Endothelial cell of umbilical vein (primary cell): ENCODE measurements at regions of chr11 and their contacts with region 1.

Region 1: GRCh38 chr11:103624708-103625623 is 411.5 kb upstream of the DDI1 start:
- DNase-seq: peak; percentile 99
- H3K4me3 ChIP-seq: peak overlapping the region in 1 of 3 experiments; percentile 28
- H3K27ac ChIP-seq: peak overlapping the region; percentile 100
- H3K4me1 ChIP-seq: peaks cover 32% of the 10 kb centered on the region
- H3K27me3 ChIP-seq: no peaks in the 10 kb centered on the region
- CTCF ChIP-seq: no peak
- POLR2A ChIP-seq: peak; percentile 91

Region 2: GRCh38 chr11:102794447-102794781 is 830.6 kb before region 1 on chr11:
- CTCF ChIA-PET with region 1: no interaction called
- POLR2A ChIA-PET with region 1: no interaction called
- dilution Hi-C with region 1: no loop called
- intact Hi-C with region 1: loop called (anchors 1 kb)
- DNase-seq: peak; percentile 48
- H3K4me3 ChIP-seq: no peak overlapping the region
- H3K27ac ChIP-seq: no peak overlapping the region
- H3K4me1 ChIP-seq: peaks cover 17% of the 10 kb centered on the region
- H3K27me3 ChIP-seq: no peaks in the 10 kb centered on the region
- CTCF ChIP-seq: peak; percentile 60 to 66
- POLR2A ChIP-seq: no peak

Region 3: GRCh38 chr11:103326070-103326794 is 298.7 kb before region 1 on chr11:
- CTCF ChIA-PET with region 1: no interaction called
- POLR2A ChIA-PET with region 1: no interaction called
- dilution Hi-C with region 1: no loop called
- intact Hi-C with region 1: loop called (anchors 1 kb)
- DNase-seq: peak; percentile 77
- H3K4me3 ChIP-seq: no peak overlapping the region
- H3K27ac ChIP-seq: no peak overlapping the region
- H3K4me1 ChIP-seq: peaks cover 8% of the 10 kb centered on the region
- H3K27me3 ChIP-seq: no peaks in the 10 kb centered on the region
- CTCF ChIP-seq: peak; percentile 67 to 74
- POLR2A ChIP-seq: no peak

Region 4: GRCh38 chr11:103609117-103610066 is 15.6 kb before region 1 on chr11:
- CTCF ChIA-PET with region 1: interaction called, 26 read pairs
- POLR2A ChIA-PET with region 1: interaction called, 3 read pairs
- dilution Hi-C with region 1: no loop called
- intact Hi-C with region 1: loop called (anchors 1 kb)
- DNase-seq: peak; percentile 89
- H3K4me3 ChIP-seq: no peak overlapping the region
- H3K27ac ChIP-seq: peak overlapping the region; percentile 99
- H3K4me1 ChIP-seq: peaks cover 25% of the 10 kb centered on the region
- H3K27me3 ChIP-seq: no peaks in the 10 kb centered on the region
- CTCF ChIP-seq: peak; percentile 81 to 83
- POLR2A ChIP-seq: peak; percentile 43

Region 5: DNA sequence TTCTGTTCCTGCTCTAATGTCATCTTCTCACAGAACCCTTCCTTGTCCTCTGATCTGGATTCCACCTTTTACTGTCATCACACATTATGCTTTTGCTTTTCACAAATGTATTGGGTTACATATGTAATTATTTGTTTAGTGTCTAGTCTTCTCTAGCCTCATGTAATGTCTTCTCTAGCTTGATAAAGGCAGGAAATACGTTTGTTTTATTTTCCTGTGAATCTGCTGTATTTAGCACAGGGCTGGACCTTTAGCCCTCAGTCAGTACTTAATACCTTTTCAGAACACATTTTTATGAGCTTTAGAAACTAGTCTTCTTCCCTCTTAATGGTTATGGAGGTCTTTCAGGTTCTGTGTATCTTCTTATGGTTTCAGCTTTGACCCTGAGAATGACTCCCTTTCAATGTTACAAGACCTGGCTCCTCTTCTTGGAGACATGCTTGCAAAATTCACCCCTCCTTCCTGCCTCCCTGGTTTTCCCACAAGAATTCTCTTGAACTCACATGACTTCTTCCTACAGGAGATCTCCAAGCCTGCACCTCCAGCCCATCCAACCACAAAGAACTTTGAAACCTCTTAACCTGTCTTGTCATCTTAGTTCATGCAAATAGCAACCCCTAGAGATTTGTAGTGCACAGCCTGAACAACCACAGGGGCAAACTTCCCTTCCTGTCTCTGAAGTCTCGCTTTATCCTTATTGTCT is 278.8 kb after region 1 on chr11:
- CTCF ChIA-PET with region 1: no interaction called
- POLR2A ChIA-PET with region 1: no interaction called
- dilution Hi-C with region 1: no loop called
- intact Hi-C with region 1: loop called (anchors 1 kb)
- DNase-seq: no peak
- H3K4me3 ChIP-seq: no peak overlapping the region
- H3K27ac ChIP-seq: no peak overlapping the region
- H3K4me1 ChIP-seq: peaks cover 36% of the 10 kb centered on the region
- H3K27me3 ChIP-seq: no peaks in the 10 kb centered on the region
- CTCF ChIP-seq: no peak
- POLR2A ChIP-seq: no peak

Region 6: DNA sequence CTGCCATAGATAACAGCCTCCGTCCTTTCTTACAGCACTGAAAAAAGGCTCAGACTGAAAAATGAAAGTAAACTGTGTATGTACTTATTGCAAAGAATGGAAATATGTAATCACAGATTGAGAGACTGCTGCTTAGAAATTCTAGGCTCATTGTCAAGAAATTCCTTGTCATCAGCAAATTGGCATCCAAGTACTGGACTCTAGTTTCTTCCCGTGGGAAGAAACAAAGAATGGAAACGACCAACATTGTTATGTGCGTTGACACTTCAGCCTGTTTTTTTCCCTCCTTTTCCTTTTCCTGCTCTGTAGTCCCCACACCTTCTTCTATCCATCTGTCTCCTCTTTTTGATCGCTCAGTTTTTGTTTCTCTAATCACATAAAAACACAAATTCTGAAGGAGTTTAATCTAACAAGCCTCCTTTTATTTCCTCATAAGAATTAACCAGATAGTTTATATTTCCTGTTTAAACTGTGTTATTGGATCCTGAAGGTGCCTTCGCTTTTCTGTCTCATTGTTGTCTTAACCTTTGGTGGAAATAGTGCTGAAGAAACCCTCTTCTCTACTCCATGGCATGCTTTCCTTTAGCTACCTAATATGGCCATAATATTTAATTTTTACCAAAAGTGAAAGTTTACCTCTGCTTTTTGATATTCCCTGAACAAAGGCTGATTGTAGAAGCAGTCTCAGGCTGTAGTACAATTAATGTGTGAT is 1293.3 kb after region 1 on chr11:
- CTCF ChIA-PET with region 1: no interaction called
- POLR2A ChIA-PET with region 1: no interaction called
- dilution Hi-C with region 1: no loop called
- intact Hi-C with region 1: loop called (anchors 5 kb)
- DNase-seq: peak; percentile 98
- H3K4me3 ChIP-seq: peak overlapping the region; percentile 55 to 81 (median 65)
- H3K27ac ChIP-seq: peak overlapping the region; percentile 81
- H3K4me1 ChIP-seq: peaks cover 25% of the 10 kb centered on the region
- H3K27me3 ChIP-seq: no peaks in the 10 kb centered on the region
- CTCF ChIP-seq: no peak
- POLR2A ChIP-seq: no peak